Aorta (tissue), 5 donors: ENCODE measurements at regions of chr1 and their contacts with region 1.

Region 1: DNA sequence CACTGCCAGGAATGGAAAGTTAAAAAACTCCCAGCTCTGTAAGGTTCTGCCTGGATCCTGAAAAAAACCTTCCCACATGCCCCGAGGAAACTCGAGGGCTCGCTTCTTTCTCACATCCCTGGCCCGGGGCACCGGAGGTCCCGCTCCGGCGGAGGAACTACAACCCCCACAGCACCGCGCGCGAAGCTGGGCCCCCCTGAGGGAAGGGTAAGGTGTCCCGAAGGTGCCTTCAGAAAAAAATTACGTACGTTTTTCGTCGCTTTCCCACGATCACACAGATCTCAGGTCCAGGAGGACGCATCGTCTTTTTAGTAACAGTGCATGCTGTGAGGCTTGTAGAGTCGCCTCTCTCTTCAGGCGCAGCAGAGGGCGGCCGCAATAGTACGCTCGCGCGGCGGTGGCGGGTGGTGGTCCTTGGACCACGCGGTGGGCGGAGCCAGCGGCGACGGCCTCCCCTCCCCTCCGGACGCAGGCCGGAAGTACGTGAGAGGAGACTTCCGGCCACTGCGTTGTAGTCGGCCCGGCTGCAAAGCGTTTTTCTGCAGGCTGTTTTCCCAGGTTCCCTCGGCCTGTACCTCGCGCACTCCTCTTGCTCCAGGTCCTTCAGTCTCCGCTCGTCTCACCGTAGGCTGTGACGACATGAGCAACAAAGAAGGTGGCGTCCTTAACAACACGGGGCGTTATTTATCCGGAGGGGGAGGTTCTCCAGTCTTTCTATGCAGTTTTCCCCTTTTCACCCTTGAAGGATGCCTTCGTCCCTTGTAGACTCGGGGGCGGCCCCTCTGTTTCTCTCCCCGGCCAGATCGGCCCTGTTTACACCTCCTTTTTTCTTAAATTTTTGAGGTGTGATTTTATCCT is at the start of gene TSNAX:
- DNase-seq: peak; percentile 95 to 97
- ATAC-seq: peak; percentile 100
- H3K4me3 ChIP-seq: peak within 1 kb of the TSS; percentile 71 to 74
- H3K27ac ChIP-seq: peak within 1 kb of the TSS in 1 of 2 donors; percentile 85
- H3K4me1 ChIP-seq: peaks cover 0 to 2% of the 10 kb centered on the region in 2 donors
- H3K27me3 ChIP-seq: no peaks in the 10 kb centered on the region
- total RNA-seq, gene TSNAX: 37.2 to 42.0 TPM

Region 2: GRCh38 chr1:231240883-231241735 is 287.3 kb before region 1 on chr1 and contains the start of gene GNPAT:
- intact Hi-C with region 1: loop called in 1 of 2 experiments (anchors 5 kb)
- DNase-seq: peak; percentile 91 to 97
- ATAC-seq: peak; percentile 99
- H3K4me3 ChIP-seq: peak within 1 kb of the TSS; percentile 75 to 98
- H3K27ac ChIP-seq: peak within 1 kb of the TSS in 1 of 2 donors; percentile 49
- H3K4me1 ChIP-seq: peaks cover 2 to 10% of the 10 kb centered on the region in 2 donors
- H3K27me3 ChIP-seq: no peaks in the 10 kb centered on the region
- total RNA-seq, gene GNPAT: 33.5 to 36.6 TPM

Region 3: DNA sequence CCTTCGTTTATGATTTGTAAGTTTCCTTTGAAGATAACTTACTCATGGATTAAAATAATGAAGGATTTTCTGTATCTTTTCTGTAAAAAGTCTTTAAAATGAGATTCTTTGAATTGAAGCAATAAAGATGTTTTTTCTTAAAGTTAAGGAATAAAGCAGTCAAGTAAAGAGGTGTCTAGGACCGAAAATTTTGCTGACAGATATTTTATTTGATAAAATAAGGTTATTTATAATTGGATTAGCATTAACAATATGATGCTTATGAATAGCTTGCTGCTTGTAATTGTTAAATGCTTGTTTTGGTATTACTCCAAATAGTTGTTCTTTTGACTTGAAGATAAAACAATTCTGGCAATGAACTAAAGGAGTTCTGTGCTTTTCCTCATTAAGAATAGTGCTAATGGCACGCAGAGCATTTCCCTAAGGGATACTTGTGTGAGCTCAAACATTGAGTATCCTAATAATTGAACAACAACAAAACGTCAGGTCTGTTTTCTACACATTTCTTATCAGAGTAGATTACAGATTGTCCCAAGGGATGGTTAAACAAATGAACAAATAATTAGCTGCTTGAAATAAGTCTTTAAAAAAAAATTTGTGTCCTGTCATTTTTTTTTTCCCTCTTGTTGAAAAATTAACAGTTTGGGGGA is 16.7 kb after region 1 on chr1:
- intact Hi-C with region 1: no loop called
- DNase-seq: no peak
- ATAC-seq: no peak
- H3K4me3 ChIP-seq: no peak overlapping the region
- H3K27ac ChIP-seq: no peak overlapping the region
- H3K4me1 ChIP-seq: no peaks in the 10 kb centered on the region
- H3K27me3 ChIP-seq: no peaks in the 10 kb centered on the region